AG04449 (cell line): ENCODE measurements at regions of chr1 and their contacts with region 1.

Region 1: DNA sequence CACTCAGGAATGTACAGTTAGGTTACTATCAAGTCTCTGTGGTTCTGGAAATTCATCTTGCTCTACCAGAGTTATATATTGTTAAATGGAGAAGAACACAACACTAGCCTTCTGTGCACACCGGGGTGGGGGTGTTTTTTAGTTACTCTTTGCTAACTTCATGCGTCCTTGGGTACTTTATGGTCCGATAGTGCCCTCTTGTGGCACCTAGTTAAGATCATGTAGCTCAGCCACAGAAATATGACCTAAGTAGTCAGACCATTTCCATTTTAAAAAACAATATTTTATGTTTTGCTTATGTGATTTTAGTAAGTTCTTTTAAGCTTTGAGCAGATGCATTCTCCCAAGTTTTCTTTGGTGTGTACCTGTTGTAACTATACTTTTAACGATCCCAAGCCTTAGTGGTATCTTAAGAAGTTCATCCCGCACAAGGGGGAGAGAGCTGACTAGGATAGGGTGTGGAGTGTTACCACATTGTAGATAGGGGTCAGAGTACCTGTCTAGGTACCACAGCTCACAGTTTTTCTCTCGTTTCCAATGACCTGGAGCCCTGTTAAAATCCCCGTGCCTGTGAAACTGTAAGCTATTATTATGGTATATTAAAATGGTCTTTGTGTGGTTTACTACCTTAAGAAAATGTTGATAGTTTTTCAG is 20.6 kb upstream of the SH3D21 start:
- DNase-seq: peak; percentile 69
- H3K4me3 ChIP-seq: no peak overlapping the region
- CTCF ChIP-seq: peak; percentile 54

Region 2: GRCh38 chr1:36134505-36135329 is 150.9 kb before region 1 on chr1:
- CTCF ChIA-PET with region 1: interaction called, 15 read pairs
- POLR2A ChIA-PET with region 1: no interaction called
- DNase-seq: no peak
- H3K4me3 ChIP-seq: no peak overlapping the region
- CTCF ChIP-seq: peak; percentile 77

Region 3: GRCh38 chr1:36223993-36224536 is 61.5 kb before region 1 on chr1 and contains the start of gene THRAP3:
- CTCF ChIA-PET with region 1: interaction called, 14 read pairs
- POLR2A ChIA-PET with region 1: no interaction called
- DNase-seq: peak; percentile 95
- H3K4me3 ChIP-seq: peak within 1 kb of the TSS; percentile 85
- CTCF ChIP-seq: no peak

Region 4: GRCh38 chr1:36257375-36257767 is 28.2 kb before region 1 on chr1:
- CTCF ChIA-PET with region 1: interaction called, 33 read pairs
- POLR2A ChIA-PET with region 1: no interaction called
- DNase-seq: no peak
- H3K4me3 ChIP-seq: no peak overlapping the region
- CTCF ChIP-seq: no peak

Region 5: GRCh38 chr1:36300526-36300925 is 15.0 kb after region 1 on chr1:
- CTCF ChIA-PET with region 1: interaction called, 126 read pairs
- POLR2A ChIA-PET with region 1: no interaction called
- DNase-seq: no peak
- H3K4me3 ChIP-seq: no peak overlapping the region
- CTCF ChIP-seq: no peak

Region 6: DNA sequence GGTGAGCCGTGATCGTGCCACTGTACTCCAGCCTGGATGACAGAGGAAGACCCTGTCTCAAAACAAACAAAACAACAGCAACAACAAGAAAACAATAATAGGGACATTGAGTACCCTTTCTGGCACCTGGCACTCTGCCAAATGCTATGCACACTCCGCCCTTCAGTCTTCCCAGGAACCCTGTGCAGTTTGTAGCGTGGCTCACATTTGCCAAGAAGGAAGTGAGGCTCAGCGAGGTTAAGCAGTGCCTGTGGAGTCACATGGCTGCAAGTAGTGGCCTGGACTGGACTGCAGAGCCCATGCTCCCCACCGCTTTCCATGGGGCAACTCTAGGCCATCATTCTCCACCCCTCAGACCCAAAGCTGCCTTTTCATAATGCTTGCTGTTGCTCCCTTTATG is 43.1 kb after region 1 on chr1:
- CTCF ChIA-PET with region 1: no interaction called
- POLR2A ChIA-PET with region 1: no interaction called
- DNase-seq: no peak
- H3K4me3 ChIP-seq: no peak overlapping the region
- CTCF ChIP-seq: no peak